ENCODE measurements at regions of chr3 and their contacts with region 1.

Region 1: GRCh38 chr3:148991194-148992026 is at the start of gene GYG1:
- DNase-seq: peak; percentile 82 to 92 (median 87)
- ATAC-seq: peak; percentile 85 to 95 (median 94)
- H3K4me3 ChIP-seq: peak within 1 kb of the TSS; percentile 70 to 98 (median 92)
- H3K27ac ChIP-seq: peak within 1 kb of the TSS; percentile 85 to 99 (median 97)
- H3K4me1 ChIP-seq: peaks cover 0 to 30% (median 17%) of the 10 kb centered on the region in 12 donors
- H3K27me3 ChIP-seq: no peaks in the 10 kb centered on the region
- CTCF ChIP-seq: peak in 10 of 12 donors; percentile 11 to 61 (median 40)
- POLR2A ChIP-seq: peak in 1 of 2 donors; percentile 81
- total RNA-seq, gene GYG1: 78.2 to 190 (median 144) TPM

Region 2: DNA sequence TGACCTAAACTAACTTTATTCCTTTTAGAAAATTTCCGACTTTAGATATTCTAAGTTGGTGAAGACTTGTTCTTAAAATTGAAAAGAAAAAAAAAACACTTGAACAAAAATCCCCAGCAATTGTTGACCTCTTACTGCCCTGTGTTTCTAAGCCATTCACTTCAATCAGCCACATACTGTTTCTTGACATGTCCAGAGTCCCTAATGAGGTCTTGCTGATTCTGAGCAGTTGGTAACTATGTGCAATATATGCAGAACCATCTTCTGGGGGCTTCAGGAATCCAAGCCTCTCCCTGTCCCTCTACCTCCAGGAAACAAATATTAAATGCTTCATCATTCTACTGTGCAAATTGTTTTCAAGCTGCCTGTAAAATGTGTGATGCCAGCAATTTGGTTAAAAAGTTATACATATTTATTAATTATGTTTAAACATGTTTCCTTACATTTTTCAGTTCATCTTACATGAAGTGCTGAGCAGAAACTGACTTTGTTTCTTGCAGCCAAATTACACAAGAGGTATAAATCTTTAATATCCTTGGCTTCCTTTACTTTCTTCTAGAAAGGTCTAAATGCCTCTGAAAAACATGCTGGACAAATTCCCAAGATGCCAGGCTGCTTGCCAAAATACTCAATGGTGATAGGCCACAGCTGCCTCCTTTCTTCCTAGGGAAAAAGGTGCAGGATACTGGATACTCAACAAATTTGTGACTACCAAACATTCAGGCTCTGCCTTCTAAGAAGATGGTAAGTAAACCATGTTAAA is 19.8 kb before region 1 on chr3:
- intact Hi-C with region 1: loop called in 1 of 10 experiments (anchors 1 kb)
- DNase-seq: peak in 1 of 5 donors; percentile 39
- ATAC-seq: no peak
- H3K4me3 ChIP-seq: no peak overlapping the region
- H3K27ac ChIP-seq: no peak overlapping the region
- H3K4me1 ChIP-seq: peaks cover 0 to 29% (median 8%) of the 10 kb centered on the region in 12 donors
- H3K27me3 ChIP-seq: no peaks in the 10 kb centered on the region
- CTCF ChIP-seq: no peak
- POLR2A ChIP-seq: no peak

Region 3: GRCh38 chr3:149026718-149027117 is 35.3 kb after region 1 on chr3:
- intact Hi-C with region 1: loop called in 1 of 10 experiments (anchors 5 kb)
- DNase-seq: no peak
- ATAC-seq: no peak
- H3K4me3 ChIP-seq: no peak overlapping the region
- H3K27ac ChIP-seq: no peak overlapping the region
- H3K4me1 ChIP-seq: peaks cover 0 to 5% (median 0%) of the 10 kb centered on the region in 12 donors
- H3K27me3 ChIP-seq: no peaks in the 10 kb centered on the region
- CTCF ChIP-seq: no peak
- POLR2A ChIP-seq: no peak

Region 4: DNA sequence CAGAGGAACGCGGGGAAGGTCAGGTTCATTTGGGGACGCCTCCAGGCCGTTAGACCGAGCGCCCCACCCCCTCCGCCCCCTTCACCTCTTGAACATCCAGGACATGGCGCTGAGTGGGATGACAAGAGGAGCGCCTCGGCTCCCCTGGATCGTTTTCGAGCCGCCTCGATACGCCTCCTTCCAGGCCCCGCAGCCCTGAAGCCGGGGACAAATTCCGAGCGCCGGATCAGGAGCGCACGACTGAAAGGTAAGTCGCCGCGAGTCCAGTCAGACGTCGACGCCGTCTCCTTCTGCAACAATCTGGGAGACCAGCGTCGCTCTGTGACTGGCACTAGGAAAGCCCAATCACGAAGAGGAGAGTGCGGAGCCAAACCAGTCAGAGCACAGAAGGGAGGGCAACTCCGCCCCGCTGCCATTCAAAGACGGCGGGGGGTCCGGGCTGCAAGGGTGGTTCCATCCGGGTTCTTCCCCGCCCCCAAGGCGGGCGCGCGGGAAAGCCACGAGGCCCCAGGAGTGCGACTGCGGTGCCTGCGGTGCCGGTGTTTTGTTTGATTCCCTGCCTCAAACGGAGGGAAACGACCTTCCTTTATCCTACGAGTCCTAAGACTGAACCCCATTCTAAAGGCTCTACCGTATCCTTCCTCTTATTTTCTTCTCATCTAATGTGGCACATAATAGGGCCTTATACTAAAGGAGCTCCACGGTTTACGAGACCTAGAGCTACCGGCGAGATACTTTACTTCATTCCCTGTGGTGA is 95.0 kb after region 1 on chr3 and contains the start of gene HLTF:
- intact Hi-C with region 1: loop called in 3 of 10 experiments (anchors 5 to 10 kb)
- DNase-seq: peak; percentile 95 to 97 (median 97)
- ATAC-seq: peak; percentile 98 to 100 (median 100)
- H3K4me3 ChIP-seq: peak within 1 kb of the TSS; percentile 34 to 87 (median 76)
- H3K27ac ChIP-seq: peak within 1 kb of the TSS in 11 of 12 donors; percentile 28 to 85 (median 71)
- H3K4me1 ChIP-seq: peaks cover 0 to 20% (median 9%) of the 10 kb centered on the region in 12 donors
- H3K27me3 ChIP-seq: no peaks in the 10 kb centered on the region
- CTCF ChIP-seq: no peak
- POLR2A ChIP-seq: peak in 1 of 2 donors; percentile 51
- total RNA-seq, gene HLTF: 12.3 to 39.4 (median 22.0) TPM